ENCODE measurements at regions of chr17 and their contacts with region 1.

Region 1: DNA sequence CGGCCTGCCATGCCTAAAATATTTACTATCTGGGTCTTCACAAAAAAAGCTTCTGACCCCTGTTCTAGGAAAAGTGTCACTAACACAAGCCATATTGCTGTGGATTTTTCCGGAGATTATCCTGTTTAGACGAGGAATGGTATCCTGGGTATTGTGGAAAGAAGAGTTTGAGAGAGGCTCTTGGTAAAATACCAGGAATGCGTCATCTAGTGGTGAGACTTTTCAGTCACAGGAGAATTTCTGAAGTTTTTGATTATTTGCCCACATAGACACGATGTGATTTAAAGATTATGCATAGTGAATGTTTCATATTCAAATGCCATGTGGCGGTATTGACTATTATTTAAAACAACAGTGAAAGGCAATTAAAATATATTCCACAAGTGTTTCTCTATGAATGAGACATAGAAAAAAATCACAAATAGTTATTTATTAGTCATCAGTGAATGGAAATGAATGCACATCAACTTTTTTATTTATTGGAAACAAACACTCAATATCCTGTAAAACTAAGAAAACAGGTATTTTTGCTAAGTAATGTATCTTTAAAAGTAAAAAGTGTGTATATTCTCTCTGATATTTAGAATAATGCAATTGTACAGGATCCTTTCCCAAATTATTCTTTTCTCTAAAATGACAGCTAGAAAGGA is 7.8 kb downstream of the KRT28 start:
- DNase-seq: no peak
- H3K4me3 ChIP-seq: no peak overlapping the region
- H3K27ac ChIP-seq: no peak overlapping the region
- H3K4me1 ChIP-seq: no peaks in the 10 kb centered on the region
- H3K27me3 ChIP-seq: peaks cover 6% of the 10 kb centered on the region
- CTCF ChIP-seq: peak; percentile 29 to 75 (median 65)
- POLR2A ChIP-seq: no peak

Region 2: GRCh38 chr17:40582328-40582901 is 209.5 kb before region 1 on chr17:
- intact Hi-C with region 1: no loop called
- DNase-seq: peak; percentile 31 to 80 (median 50)
- H3K4me3 ChIP-seq: no peak overlapping the region
- H3K27ac ChIP-seq: peak overlapping the region in 1 of 5 donors; percentile 63
- H3K4me1 ChIP-seq: no peaks in the 10 kb centered on the region
- H3K27me3 ChIP-seq: no peaks in the 10 kb centered on the region
- CTCF ChIP-seq: no peak
- POLR2A ChIP-seq: no peak

Region 3: GRCh38 chr17:40615295-40615988 is 176.5 kb before region 1 on chr17:
- intact Hi-C with region 1: loop called (anchors 5 to 10 kb)
- DNase-seq: peak in 6 of 7 donors; percentile 39 to 80 (median 43)
- H3K4me3 ChIP-seq: no peak overlapping the region
- H3K27ac ChIP-seq: no peak overlapping the region
- H3K4me1 ChIP-seq: no peaks in the 10 kb centered on the region
- H3K27me3 ChIP-seq: peaks cover 3% of the 10 kb centered on the region
- CTCF ChIP-seq: peak in 4 of 6 experiments; percentile 30 to 47 (median 40)
- POLR2A ChIP-seq: no peak

Region 4: DNA sequence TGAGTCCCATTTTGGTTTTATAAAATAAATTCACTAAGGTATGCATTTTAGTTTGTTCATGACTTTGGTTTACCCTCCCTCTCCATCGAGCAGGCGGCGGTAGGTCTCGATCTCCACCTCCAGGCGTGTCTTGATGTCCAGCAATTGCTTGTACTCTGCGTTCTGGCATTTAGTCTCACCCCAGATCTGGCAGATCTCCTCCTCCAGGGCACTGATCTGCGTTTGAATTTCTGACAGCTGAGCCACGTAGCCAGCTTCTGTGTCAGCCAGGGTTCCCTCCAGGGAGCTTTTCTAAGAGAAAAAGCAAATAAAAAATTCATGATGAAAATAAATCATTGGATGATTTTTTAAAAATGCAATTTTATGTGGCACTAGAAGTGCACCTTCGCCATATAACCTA is 92.5 kb before region 1 on chr17:
- intact Hi-C with region 1: no loop called
- DNase-seq: no peak
- H3K4me3 ChIP-seq: no peak overlapping the region
- H3K27ac ChIP-seq: no peak overlapping the region
- H3K4me1 ChIP-seq: no peaks in the 10 kb centered on the region
- H3K27me3 ChIP-seq: peaks cover 10% of the 10 kb centered on the region
- CTCF ChIP-seq: no peak
- POLR2A ChIP-seq: no peak

Measured in adrenal gland (tissue), 19 donors.